Activated CD4-positive, alpha-beta T cell treated with anti-CD3 and anti-CD28 coated beads, Interleukin-2, amount 10 ng/mL, durations not matched to agents 24 days and 14 days (primary cell): ENCODE measurements at regions of chr9 and their contacts with region 1.

Region 1: DNA sequence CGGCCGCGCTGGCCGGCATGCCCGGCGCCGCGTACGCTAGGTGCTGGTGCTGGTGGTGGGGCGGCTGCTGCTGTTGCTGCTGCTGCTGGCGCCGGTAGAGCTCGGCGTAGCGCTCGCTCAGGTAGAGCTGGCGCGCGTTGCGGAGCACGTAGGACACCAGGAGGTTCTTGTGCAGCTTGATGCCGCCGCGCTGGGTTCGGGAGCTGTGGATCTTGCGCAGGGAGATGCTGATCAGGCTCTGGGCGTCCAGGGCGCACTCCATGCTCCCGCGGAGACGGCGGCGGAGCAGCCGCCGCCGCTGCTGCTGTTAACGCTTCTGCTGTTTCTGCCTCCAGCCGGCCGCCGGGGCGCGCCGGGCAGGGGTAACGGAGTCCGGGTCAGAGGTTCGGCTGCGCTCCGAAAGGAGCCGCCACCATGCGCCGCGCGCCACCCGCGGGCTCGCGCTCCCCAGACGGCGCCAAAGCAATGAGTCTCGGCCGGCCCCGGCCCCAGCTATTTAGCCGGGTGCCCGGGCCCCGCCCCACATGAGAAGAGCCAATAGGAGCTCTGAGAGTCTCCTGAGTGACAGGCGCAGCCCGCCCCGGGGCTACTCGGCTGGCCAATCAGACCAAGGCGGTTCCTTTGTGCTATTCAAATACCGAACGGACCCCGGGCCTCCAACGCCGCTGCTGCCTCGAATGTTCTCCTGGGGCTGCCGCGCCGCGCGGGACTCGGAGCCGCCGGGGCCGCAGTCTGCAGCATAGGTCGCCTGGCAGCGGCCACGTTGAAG is at the start of gene IER5L:
- DNase-seq: peak; percentile 99
- H3K4me3 Mint-ChIP-seq: peak within 1 kb of the TSS; percentile 92
- H3K27ac Mint-ChIP-seq: peak within 1 kb of the TSS; percentile 89
- H3K4me1 Mint-ChIP-seq: peaks cover 11% of the 10 kb centered on the region
- H3K27me3 Mint-ChIP-seq: peaks cover 10% of the 10 kb centered on the region
- total RNA-seq, gene IER5L: 11.7 and 12.2 TPM in 2 replicates

Region 2: GRCh38 chr9:128067876-128068613 is 1109.9 kb before region 1 on chr9 and contains the start of gene SLC25A25:
- intact Hi-C with region 1: loop called (anchors 5 kb)
- DNase-seq: peak; percentile 100
- H3K4me3 Mint-ChIP-seq: peak within 1 kb of the TSS; percentile 93
- H3K27ac Mint-ChIP-seq: peak within 1 kb of the TSS; percentile 84
- H3K4me1 Mint-ChIP-seq: peaks cover 43% of the 10 kb centered on the region
- H3K27me3 Mint-ChIP-seq: no peaks in the 10 kb centered on the region
- total RNA-seq, gene SLC25A25: 12.2 and 14.0 TPM in 2 replicates

Region 3: DNA sequence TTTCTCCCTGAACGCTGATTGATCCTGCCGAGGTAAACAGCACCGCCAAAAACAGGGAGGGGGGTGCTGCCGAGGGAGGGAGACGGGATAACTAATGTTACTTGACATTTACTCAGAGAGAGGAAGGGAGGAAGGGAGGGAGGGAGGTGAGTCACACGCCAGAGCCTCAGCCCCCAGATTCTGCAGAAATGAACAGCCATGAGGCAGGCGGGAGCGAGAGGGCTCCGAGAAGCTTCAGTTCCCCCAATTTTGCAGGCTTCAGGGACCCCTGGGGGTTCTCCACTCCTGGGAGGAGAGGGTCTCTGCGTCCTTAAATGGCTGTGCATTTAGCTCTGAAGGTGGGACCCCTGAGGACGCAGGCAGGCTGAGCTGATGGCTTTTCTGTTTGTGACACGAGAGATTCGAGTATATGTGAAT is 59.2 kb after region 1 on chr9:
- intact Hi-C with region 1: loop called (anchors 2 kb)
- DNase-seq: peak; percentile 80
- H3K4me3 Mint-ChIP-seq: peak overlapping the region; percentile 79
- H3K27ac Mint-ChIP-seq: peak overlapping the region; percentile 92
- H3K4me1 Mint-ChIP-seq: peaks cover 51% of the 10 kb centered on the region
- H3K27me3 Mint-ChIP-seq: no peaks in the 10 kb centered on the region

Region 4: DNA sequence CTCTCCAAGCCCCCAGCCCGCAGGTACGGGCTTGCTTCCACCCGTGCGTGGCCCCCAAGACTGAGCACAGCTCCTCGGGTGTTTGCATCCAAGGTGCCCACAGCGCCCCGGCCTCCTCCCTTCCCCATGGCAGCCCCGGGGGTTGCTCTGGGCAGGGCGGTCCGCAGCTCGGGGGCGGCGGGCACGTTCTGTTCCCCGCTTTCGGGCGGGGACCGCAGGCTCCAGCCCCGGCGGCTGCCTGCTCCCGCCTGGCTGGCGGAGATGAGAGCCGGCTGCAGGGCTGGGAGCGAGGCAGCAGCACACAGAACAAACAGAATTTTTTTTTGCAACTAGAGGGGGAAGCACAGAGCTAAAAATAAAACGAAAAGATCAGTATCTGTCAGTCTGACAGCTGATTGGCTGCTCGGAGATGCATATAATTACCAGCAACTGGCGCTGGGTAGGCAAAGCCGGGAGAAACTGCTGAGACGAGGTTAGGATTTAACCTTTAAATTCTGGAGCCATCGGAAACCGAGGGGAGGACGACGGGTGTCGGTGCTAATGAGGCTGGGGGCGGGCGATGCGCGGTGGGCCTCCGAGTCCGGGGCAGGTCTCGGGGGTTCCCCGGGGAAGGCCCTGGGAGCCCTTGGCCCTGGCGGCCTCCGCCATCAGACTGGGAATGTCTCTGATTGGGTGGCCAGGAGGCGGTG is 142.7 kb after region 1 on chr9:
- intact Hi-C with region 1: loop called (anchors 5 kb)
- DNase-seq: peak; percentile 87
- H3K4me3 Mint-ChIP-seq: peak overlapping the region; percentile 81
- H3K27ac Mint-ChIP-seq: peak overlapping the region; percentile 89
- H3K4me1 Mint-ChIP-seq: peaks cover 15% of the 10 kb centered on the region
- H3K27me3 Mint-ChIP-seq: peaks cover 1% of the 10 kb centered on the region

Region 5: GRCh38 chr9:129406278-129407225 is 228.6 kb after region 1 on chr9:
- intact Hi-C with region 1: no loop called
- DNase-seq: no peak
- H3K4me3 Mint-ChIP-seq: no peak overlapping the region
- H3K27ac Mint-ChIP-seq: peak overlapping the region; percentile 26
- H3K4me1 Mint-ChIP-seq: peaks cover 8% of the 10 kb centered on the region
- H3K27me3 Mint-ChIP-seq: peaks cover 8% of the 10 kb centered on the region

Region 6: GRCh38 chr9:129460323-129461261 is 282.6 kb after region 1 on chr9:
- intact Hi-C with region 1: loop called (anchors 1 kb)
- DNase-seq: peak; percentile 96
- H3K4me3 Mint-ChIP-seq: peak overlapping the region; percentile 83
- H3K27ac Mint-ChIP-seq: peak overlapping the region; percentile 93
- H3K4me1 Mint-ChIP-seq: peaks cover 39% of the 10 kb centered on the region
- H3K27me3 Mint-ChIP-seq: no peaks in the 10 kb centered on the region

Region 7: GRCh38 chr9:129626079-129626624 is 448.2 kb after region 1 on chr9 and contains the start of gene NTMT1:
- intact Hi-C with region 1: loop called (anchors 2 kb)
- DNase-seq: peak; percentile 97
- H3K4me3 Mint-ChIP-seq: peak within 1 kb of the TSS; percentile 83
- H3K27ac Mint-ChIP-seq: peak within 1 kb of the TSS; percentile 93
- H3K4me1 Mint-ChIP-seq: peaks cover 33% of the 10 kb centered on the region
- H3K27me3 Mint-ChIP-seq: peaks cover 8% of the 10 kb centered on the region
- total RNA-seq, gene NTMT1: 72.0 and 72.4 TPM in 2 replicates